Activated naive CD4-positive, alpha-beta T cell treated with anti-CD3 and anti-CD28 coated beads, Interleukin-2, amount 10 ng/mL, durations not matched to agents 7 days and 5 days (primary cell): ENCODE measurements at regions of chr5 and their contacts with region 1.

Region 1: GRCh38 chr5:134041570-134042411 is 37.0 kb upstream of the VDAC1 start:
- DNase-seq: no peak
- H3K4me3 Mint-ChIP-seq: no peak overlapping the region
- H3K27ac Mint-ChIP-seq: peak overlapping the region; percentile 63
- H3K4me1 Mint-ChIP-seq: peaks cover 49% of the 10 kb centered on the region
- H3K27me3 Mint-ChIP-seq: peaks cover 21% of the 10 kb centered on the region

Region 2: DNA sequence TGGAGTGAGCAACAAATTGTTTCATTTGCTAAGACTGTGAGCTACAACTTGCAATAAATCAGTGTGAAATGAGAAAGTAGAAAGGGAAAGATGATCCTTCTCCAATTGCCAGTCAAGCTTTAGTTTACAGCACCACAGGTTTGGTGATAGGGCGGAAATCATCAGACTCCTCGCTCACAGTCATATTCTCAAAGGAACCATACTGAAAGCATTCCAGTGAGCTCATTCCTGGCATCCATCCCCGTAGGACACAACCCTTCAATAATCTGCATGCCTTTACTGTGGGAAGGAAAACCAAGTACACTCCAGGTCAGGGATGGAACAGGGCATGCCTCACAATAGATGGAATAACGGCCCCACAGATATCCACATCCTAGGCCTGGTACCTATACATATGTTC is 510.2 kb before region 1 on chr5:
- CTCF ChIA-PET with region 1: no interaction called
- DNase-seq: no peak
- H3K4me3 Mint-ChIP-seq: no peak overlapping the region
- H3K27ac Mint-ChIP-seq: no peak overlapping the region
- H3K4me1 Mint-ChIP-seq: no peaks in the 10 kb centered on the region
- H3K27me3 Mint-ChIP-seq: no peaks in the 10 kb centered on the region

Region 3: GRCh38 chr5:133968049-133968980 is 73.5 kb before region 1 on chr5 and contains the start of gene C5orf15:
- CTCF ChIA-PET with region 1: no interaction called
- DNase-seq: peak; percentile 97
- H3K4me3 Mint-ChIP-seq: peak within 1 kb of the TSS; percentile 98
- H3K27ac Mint-ChIP-seq: peak within 1 kb of the TSS; percentile 97
- H3K4me1 Mint-ChIP-seq: peaks cover 53% of the 10 kb centered on the region
- H3K27me3 Mint-ChIP-seq: no peaks in the 10 kb centered on the region

Region 4: GRCh38 chr5:134026521-134027268 is 15.1 kb before region 1 on chr5:
- CTCF ChIA-PET with region 1: interaction called, 14 read pairs
- DNase-seq: peak; percentile 73
- H3K4me3 Mint-ChIP-seq: no peak overlapping the region
- H3K27ac Mint-ChIP-seq: no peak overlapping the region
- H3K4me1 Mint-ChIP-seq: no peaks in the 10 kb centered on the region
- H3K27me3 Mint-ChIP-seq: peaks cover 36% of the 10 kb centered on the region

Region 5: DNA sequence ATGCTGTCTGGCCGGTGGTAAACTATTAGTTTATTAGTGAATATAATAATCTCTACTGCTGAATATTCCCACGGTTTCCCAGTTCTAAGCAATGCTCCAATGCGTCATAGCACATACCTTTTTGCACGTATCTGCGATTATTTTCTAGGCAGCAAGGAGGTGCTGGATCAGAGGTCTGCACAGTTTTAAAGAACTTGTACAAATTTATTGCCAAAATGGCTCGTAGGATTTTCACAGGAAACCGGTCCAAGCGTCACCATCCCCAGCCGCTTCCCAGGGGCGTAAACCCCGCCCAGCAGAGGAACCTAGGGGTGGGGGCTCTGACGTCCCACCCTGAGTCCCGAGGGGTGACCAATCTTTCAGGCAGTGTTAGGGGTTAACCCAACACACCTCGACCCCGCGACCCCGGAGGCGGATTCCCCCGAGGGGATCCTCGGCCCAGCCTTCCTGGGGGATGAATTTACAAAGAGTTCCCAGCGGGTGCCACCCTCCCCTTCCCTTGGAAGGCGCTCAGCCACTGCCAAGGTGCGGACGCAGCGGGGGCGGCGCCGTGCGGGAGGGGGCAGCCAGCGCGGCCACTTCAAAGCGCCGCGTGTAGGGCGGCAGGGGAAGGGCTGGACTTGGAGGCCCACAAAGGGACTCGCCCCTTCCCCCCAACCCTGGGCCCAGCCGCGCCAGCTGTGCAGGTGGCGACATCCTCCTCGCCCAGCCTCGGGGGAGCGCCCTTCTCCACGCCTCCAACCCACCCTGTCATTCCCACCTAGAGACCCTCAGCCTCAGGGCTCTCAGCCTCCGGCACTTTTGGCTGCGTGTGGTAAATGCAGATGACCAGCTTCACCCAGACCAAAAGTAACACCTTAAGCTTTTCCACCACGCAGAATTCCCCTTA is 29.2 kb after region 1 on chr5:
- CTCF ChIA-PET with region 1: interaction called, 32 read pairs
- DNase-seq: peak; percentile 58
- H3K4me3 Mint-ChIP-seq: peak overlapping the region; percentile 53
- H3K27ac Mint-ChIP-seq: peak overlapping the region; percentile 16
- H3K4me1 Mint-ChIP-seq: peaks cover 58% of the 10 kb centered on the region
- H3K27me3 Mint-ChIP-seq: peaks cover 11% of the 10 kb centered on the region

Region 6: GRCh38 chr5:134113902-134114875 is 72.4 kb after region 1 on chr5 and contains the start of gene TCF7:
- CTCF ChIA-PET with region 1: interaction called, 64 read pairs
- DNase-seq: peak; percentile 81
- H3K4me3 Mint-ChIP-seq: peak within 1 kb of the TSS; percentile 87
- H3K27ac Mint-ChIP-seq: peak within 1 kb of the TSS; percentile 95
- H3K4me1 Mint-ChIP-seq: peaks cover 69% of the 10 kb centered on the region
- H3K27me3 Mint-ChIP-seq: peaks cover 29% of the 10 kb centered on the region

Region 7: GRCh38 chr5:134125039-134126015 is 83.5 kb after region 1 on chr5:
- CTCF ChIA-PET with region 1: interaction called, 743 read pairs
- DNase-seq: no peak
- H3K4me3 Mint-ChIP-seq: peak overlapping the region; percentile 79
- H3K27ac Mint-ChIP-seq: peak overlapping the region; percentile 95
- H3K4me1 Mint-ChIP-seq: peaks cover 100% of the 10 kb centered on the region
- H3K27me3 Mint-ChIP-seq: peaks cover 12% of the 10 kb centered on the region

Region 8: DNA sequence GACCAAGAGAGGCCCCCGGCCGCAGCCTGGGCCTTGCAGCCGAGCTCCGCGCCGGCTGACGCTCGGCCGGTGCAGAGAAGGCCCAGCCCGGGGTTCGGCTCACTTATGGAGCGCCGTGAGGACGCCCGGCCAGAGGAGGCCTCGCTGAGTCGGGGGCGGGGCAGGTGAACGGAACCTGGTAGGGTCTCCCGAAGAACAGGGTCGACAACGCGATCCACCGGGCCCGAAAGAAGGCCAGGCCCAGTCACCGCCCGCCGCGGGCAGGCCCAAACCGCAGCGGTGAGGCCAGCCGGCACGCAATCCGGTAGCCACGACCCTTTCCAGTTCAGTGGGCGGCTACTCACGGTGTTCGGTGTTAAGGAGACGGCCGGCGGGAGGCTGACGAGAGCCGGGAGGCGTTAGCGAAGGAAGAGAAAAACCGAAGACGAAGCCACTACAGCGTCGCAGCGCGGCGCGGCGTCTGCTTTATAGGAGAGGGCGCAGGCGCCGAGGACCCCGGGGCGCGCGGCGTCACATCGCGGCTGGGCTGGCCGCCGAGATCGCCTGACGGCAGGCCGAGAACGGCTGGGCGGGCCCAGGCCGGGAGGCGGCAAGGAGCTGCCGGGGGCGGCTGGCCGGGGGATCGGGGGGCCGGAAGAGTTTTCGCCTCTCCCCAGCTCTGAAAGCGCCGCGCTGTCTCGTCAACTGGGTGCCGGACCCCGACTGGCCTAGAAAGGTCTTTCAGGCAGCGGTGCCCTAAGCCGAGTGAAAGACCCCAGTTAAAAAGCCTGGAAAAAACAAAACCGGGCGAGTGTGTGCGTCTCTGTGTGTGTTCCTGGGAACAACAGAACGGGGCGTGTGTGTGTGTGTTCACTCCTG is 134.9 kb after region 1 on chr5 and contains the start of gene SKP1:
- CTCF ChIA-PET with region 1: interaction called, 10 read pairs
- DNase-seq: peak; percentile 87
- H3K4me3 Mint-ChIP-seq: peak within 1 kb of the TSS; percentile 97
- H3K27ac Mint-ChIP-seq: peak within 1 kb of the TSS; percentile 99
- H3K4me1 Mint-ChIP-seq: peaks cover 29% of the 10 kb centered on the region
- H3K27me3 Mint-ChIP-seq: peaks cover 22% of the 10 kb centered on the region

Region 9: DNA sequence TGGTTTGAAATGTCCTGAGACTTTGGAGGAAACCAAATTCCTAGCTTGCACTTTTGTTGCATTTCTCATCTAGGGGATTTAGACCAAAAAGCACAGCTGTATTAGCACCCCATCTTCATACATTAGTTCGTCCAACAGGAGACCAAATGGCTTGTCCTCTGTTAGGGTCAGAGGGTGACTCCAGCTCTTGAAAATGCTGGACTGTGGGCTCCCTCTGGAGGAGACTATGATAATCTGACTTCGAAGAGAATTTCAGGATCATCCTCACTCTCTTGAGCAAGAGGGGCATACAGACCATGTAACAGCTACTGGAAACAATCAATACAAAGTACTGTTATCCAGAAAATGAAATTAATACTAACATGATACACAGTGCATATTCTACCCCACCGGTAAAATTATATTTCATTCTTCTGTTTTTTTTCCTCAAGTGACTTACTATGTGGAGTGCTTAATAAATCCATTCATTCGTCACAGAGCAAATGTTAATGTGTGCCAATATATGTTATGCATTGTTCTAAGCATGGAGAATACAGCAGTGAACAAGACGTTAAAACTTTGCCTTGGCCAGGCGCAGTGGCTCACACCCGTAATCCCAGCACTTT is 247.8 kb after region 1 on chr5:
- CTCF ChIA-PET with region 1: interaction called, 11 read pairs
- DNase-seq: peak; percentile 50
- H3K4me3 Mint-ChIP-seq: no peak overlapping the region
- H3K27ac Mint-ChIP-seq: no peak overlapping the region
- H3K4me1 Mint-ChIP-seq: no peaks in the 10 kb centered on the region
- H3K27me3 Mint-ChIP-seq: peaks cover 49% of the 10 kb centered on the region